ENCODE measurements at regions of chr5 and their contacts with region 1.

Region 1: DNA sequence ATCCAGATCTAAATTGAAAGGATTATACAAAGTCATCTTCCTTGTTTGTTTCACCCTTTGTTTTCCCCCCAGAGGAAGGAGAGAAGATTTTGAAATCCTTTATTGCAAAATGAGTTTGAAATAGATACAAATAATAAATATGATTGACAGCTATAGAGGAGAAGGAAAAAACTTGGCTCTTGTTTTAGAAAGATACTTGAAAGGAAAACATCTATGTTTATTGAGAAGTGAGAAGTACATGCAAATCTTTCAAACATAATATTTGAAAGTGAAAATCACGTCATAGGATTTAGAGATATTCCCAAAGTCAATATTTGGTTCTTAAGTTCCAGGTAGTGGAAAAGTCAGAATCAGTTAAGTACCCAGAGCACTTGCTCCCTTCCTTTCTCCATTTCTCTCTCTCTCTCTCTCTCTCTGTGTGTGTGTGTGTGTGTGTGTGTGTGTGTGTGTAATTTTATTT is 27.2 kb downstream of the PAM start:
- DNase-seq: no peak
- ATAC-seq: peak; percentile 67
- H3K4me3 ChIP-seq: no peak overlapping the region
- H3K27ac ChIP-seq: peak overlapping the region in 1 of 2 donors; percentile 70
- H3K4me1 ChIP-seq: peaks cover 0 to 40% of the 10 kb centered on the region in 2 donors
- H3K27me3 ChIP-seq: no peaks in the 10 kb centered on the region
- CTCF ChIP-seq: no peak

Region 2: DNA sequence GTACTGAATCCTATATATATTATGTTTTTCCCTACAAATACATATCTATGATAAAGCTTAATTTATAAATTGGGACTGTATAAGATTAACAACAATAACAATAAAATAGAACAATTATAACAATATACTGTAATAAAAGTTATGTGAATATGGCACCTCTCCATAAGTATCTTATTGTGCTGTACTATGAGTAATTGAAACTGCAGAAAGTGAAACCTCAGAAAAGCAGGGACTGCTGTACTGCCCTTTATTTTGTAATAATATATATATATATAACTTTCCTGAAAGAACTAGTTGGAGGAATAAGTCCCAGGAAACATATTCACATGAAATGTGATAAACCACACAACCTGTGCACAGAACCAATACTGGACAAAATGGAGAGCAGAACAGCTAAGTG is 50.1 kb after region 1 on chr5:
- intact Hi-C with region 1: no loop called
- DNase-seq: no peak
- ATAC-seq: no peak
- H3K4me3 ChIP-seq: no peak overlapping the region
- H3K27ac ChIP-seq: no peak overlapping the region
- H3K4me1 ChIP-seq: peaks cover 0 to 4% of the 10 kb centered on the region in 2 donors
- H3K27me3 ChIP-seq: no peaks in the 10 kb centered on the region
- CTCF ChIP-seq: no peak

Region 3: GRCh38 chr5:102865510-102866236 is 83.3 kb after region 1 on chr5:
- intact Hi-C with region 1: loop called in 1 of 2 experiments (anchors 10 kb)
- DNase-seq: peak; percentile 65 to 93 (median 74)
- ATAC-seq: peak; percentile 87
- H3K4me3 ChIP-seq: peak overlapping the region; percentile 52 to 54
- H3K27ac ChIP-seq: peak overlapping the region; percentile 77 to 83
- H3K4me1 ChIP-seq: peaks cover 8 to 37% of the 10 kb centered on the region in 2 donors
- H3K27me3 ChIP-seq: peaks cover 0 to 5% of the 10 kb centered on the region in 2 donors
- CTCF ChIP-seq: no peak

Region 4: GRCh38 chr5:102961671-102962070 is 179.3 kb after region 1 on chr5:
- intact Hi-C with region 1: loop called in 1 of 2 experiments (anchors 10 kb)
- DNase-seq: peak in 1 of 4 donors; percentile 16
- ATAC-seq: no peak
- H3K4me3 ChIP-seq: no peak overlapping the region
- H3K27ac ChIP-seq: no peak overlapping the region
- H3K4me1 ChIP-seq: peaks cover 0 to 6% of the 10 kb centered on the region in 2 donors
- H3K27me3 ChIP-seq: no peaks in the 10 kb centered on the region
- CTCF ChIP-seq: no peak